ENCODE measurements at regions of chr1 and their contacts with region 1.

Region 1: GRCh38 chr1:149899460-149900293 is at the start of gene BOLA1:
- DNase-seq: peak; percentile 92 to 95 (median 94)
- H3K4me3 ChIP-seq: peak within 1 kb of the TSS; percentile 46
- H3K27ac ChIP-seq: peak within 1 kb of the TSS; percentile 50 to 85
- H3K4me1 ChIP-seq: peaks cover 2% of the 10 kb centered on the region
- H3K27me3 ChIP-seq: no peaks in the 10 kb centered on the region
- CTCF ChIP-seq: peak in 2 of 3 donors; percentile 9 to 10
- EP300 ChIP-seq: peak; percentile 16
- POLR2A ChIP-seq: peak; percentile 91
- total RNA-seq, gene BOLA1: 11.6 to 36.5 (median 16.1) TPM

Region 2: GRCh38 chr1:149937060-149937705 is 37.5 kb after region 1 on chr1:
- intact Hi-C with region 1: loop called in 2 of 4 experiments (anchors 5 kb)
- DNase-seq: no peak
- H3K4me3 ChIP-seq: peak overlapping the region; percentile 54
- H3K27ac ChIP-seq: peak overlapping the region; percentile 53 to 77
- H3K4me1 ChIP-seq: peaks cover 16% of the 10 kb centered on the region
- H3K27me3 ChIP-seq: no peaks in the 10 kb centered on the region
- CTCF ChIP-seq: no peak
- EP300 ChIP-seq: no peak
- POLR2A ChIP-seq: no peak

Region 3: GRCh38 chr1:150067184-150068036 is 167.7 kb after region 1 on chr1 and contains the start of gene VPS45:
- intact Hi-C with region 1: loop called in 1 of 4 experiments (anchors 10 kb)
- DNase-seq: peak; percentile 87 to 91 (median 88)
- H3K4me3 ChIP-seq: peak within 1 kb of the TSS; percentile 64
- H3K27ac ChIP-seq: peak within 1 kb of the TSS; percentile 89 to 97
- H3K4me1 ChIP-seq: peaks cover 3% of the 10 kb centered on the region
- H3K27me3 ChIP-seq: no peaks in the 10 kb centered on the region
- CTCF ChIP-seq: peak; percentile 30 to 58 (median 30)
- EP300 ChIP-seq: peak; percentile 47
- POLR2A ChIP-seq: peak; percentile 20
- total RNA-seq, gene VPS45: 19.1 to 39.1 (median 32.7) TPM

Measured in ovary (tissue), 10 donors.